H1 (cell line): ENCODE measurements at regions of chr12 and their contacts with region 1.

Region 1: GRCh38 chr12:120504587-120504986 is 8.7 kb downstream of the DYNLL1 start:
- DNase-seq: no peak
- H3K4me3 ChIP-seq: peak overlapping the region in 3 of 4 experiments; percentile 2 to 16 (median 14); a peak in 2 of 8 replicates
- H3K27ac ChIP-seq: no peak overlapping the region
- H3K4me1 ChIP-seq: peaks cover 5 to 9% (median 6%) of the 10 kb centered on the region in 4 experiments; a peak in 5 of 7 replicates
- H3K27me3 ChIP-seq: no peaks in the 10 kb centered on the region
- CTCF ChIP-seq: no peak
- EP300 ChIP-seq: no peak
- POLR2A ChIP-seq: no peak
- RAD21 ChIP-seq: no peak

Region 2: GRCh38 chr12:120528861-120529525 is 24.4 kb after region 1 on chr12 and contains the start of gene COQ5:
- CTCF ChIA-PET with region 1: interaction called, 3 read pairs
- POLR2A ChIA-PET with region 1: interaction called, 78 read pairs
- DNase-seq: peak; percentile 41 to 92
- H3K4me3 ChIP-seq: peak within 1 kb of the TSS; percentile 85 to 99 (median 90)
- H3K27ac ChIP-seq: peak within 1 kb of the TSS; percentile 96
- H3K4me1 ChIP-seq: peaks cover 0 to 6% (median 2%) of the 10 kb centered on the region in 4 experiments; a peak in 3 of 7 replicates
- H3K27me3 ChIP-seq: no peaks in the 10 kb centered on the region
- CTCF ChIP-seq: no peak
- EP300 ChIP-seq: 0 out of 3 replicates have a peak, but pooled peaks of 1 of the 2 experiments have one; percentile 62
- POLR2A ChIP-seq: peak; percentile 72 to 92
- RAD21 ChIP-seq: no peak
- total RNA-seq, gene COQ5: 35.1 and 38.3 TPM in 2 replicates